T-cell (primary cell): ENCODE measurements at regions of chr5 and their contacts with region 1.

Region 1: DNA sequence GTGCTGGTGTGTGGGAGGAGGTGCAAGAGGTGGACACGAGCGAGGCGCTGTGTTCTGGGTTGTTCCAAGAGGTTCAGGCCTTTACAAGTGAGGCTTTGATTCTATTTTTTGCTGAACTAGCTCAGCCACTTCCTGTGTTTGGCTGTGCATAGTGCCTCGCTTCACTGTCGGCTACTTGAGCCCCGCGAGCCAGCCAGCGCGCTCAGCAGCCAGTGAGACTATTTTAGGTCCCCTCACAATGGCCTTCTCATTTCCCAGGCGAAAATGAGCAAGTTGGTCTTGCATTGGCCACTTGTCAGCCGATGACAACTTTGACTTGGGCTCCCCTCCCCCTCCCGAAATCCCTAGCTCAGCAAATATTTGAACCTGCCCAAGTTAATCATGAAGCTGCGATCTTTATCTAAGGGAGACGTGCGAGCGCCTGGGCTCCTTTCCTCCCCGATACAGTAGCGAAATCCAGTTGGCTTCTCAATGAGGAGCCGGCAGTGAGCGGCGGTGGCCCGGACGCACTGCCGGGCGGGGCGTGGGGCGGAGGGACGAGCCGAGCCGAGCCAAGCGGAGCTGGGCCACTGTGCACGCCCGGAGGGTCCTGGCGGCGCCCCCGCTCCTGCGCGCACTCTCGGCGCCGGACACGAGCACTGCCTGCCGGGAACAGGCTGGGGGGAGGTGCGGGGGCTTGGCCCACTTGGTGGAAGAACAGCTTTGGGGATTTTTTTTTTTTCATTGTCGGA is 72.6 kb downstream of the PIK3R1 start:
- DNase-seq: peak; percentile 7 to 67 (median 33)
- ATAC-seq: peak; percentile 79 to 86 (median 82)
- H3K4me3 ChIP-seq: peak overlapping the region; percentile 54 to 79
- H3K4me3 Mint-ChIP-seq: peak overlapping the region; percentile 85 to 90 (median 88)
- H3K27ac ChIP-seq: peak overlapping the region; percentile 61
- H3K27ac Mint-ChIP-seq: peak overlapping the region; percentile 96 to 98
- H3K4me1 ChIP-seq: peaks cover 41% of the 10 kb centered on the region in 2 experiments
- H3K4me1 Mint-ChIP-seq: peaks cover 89 to 91% (median 91%) of the 10 kb centered on the region in 3 donors
- H3K27me3 ChIP-seq: no peaks in the 10 kb centered on the region
- H3K27me3 Mint-ChIP-seq: no peaks in the 10 kb centered on the region

Region 2: GRCh38 chr5:68114378-68115040 is 173.6 kb before region 1 on chr5:
- CTCF ChIA-PET with region 1: no interaction called
- POLR2A ChIA-PET with region 1: no interaction called
- DNase-seq: no peak
- ATAC-seq: no peak
- H3K4me3 ChIP-seq: no peak overlapping the region
- H3K4me3 Mint-ChIP-seq: no peak overlapping the region
- H3K27ac ChIP-seq: no peak overlapping the region
- H3K27ac Mint-ChIP-seq: no peak overlapping the region
- H3K4me1 ChIP-seq: no peaks in the 10 kb centered on the region
- H3K4me1 Mint-ChIP-seq: peaks cover under 1 to 3% (median 3%) of the 10 kb centered on the region in 3 donors
- H3K27me3 ChIP-seq: no peaks in the 10 kb centered on the region
- H3K27me3 Mint-ChIP-seq: peaks cover 0 to 4% of the 10 kb centered on the region in 2 donors

Region 3: DNA sequence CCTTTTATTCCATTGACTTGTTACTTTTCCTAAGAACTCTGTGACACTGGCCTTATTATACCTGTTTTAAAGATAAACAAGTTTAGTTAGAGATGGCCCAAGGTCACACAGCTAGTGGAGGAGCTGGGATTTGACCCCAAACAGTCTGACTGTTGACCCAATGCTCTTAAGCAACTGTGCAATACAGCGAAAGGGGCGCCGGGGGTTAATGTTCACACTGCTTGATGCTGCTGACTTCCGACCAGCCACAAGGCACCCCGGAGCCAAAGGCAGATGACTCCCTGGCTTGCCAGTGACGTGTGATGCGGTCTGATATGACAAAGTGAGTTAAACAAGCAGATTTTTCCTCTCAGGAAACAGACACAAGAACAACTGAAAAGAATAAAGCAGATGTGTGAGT is 48.7 kb before region 1 on chr5:
- CTCF ChIA-PET with region 1: interaction called, 5 to 7 read pairs
- POLR2A ChIA-PET with region 1: interaction called in 1 of 2 experiments, 10 read pairs
- DNase-seq: peak; percentile 36 to 91 (median 85)
- ATAC-seq: peak; percentile 94 to 98 (median 96)
- H3K4me3 ChIP-seq: no peak overlapping the region
- H3K4me3 Mint-ChIP-seq: peak overlapping the region; percentile 11 to 62 (median 29)
- H3K27ac ChIP-seq: peak overlapping the region; percentile 65
- H3K27ac Mint-ChIP-seq: peak overlapping the region; percentile 76 to 82
- H3K4me1 ChIP-seq: peaks cover 27 to 37% of the 10 kb centered on the region in 2 experiments
- H3K4me1 Mint-ChIP-seq: peaks cover 79 to 87% (median 83%) of the 10 kb centered on the region in 3 donors
- H3K27me3 ChIP-seq: no peaks in the 10 kb centered on the region
- H3K27me3 Mint-ChIP-seq: no peaks in the 10 kb centered on the region

Region 4: GRCh38 chr5:68272289-68272688 is 15.9 kb before region 1 on chr5:
- CTCF ChIA-PET with region 1: interaction called, 10 to 57 read pairs
- POLR2A ChIA-PET with region 1: interaction called, 4 to 6 read pairs
- DNase-seq: peak in 1 of 35 experiments; percentile 51
- ATAC-seq: no peak
- H3K4me3 ChIP-seq: no peak overlapping the region
- H3K4me3 Mint-ChIP-seq: no peak overlapping the region
- H3K27ac ChIP-seq: no peak overlapping the region
- H3K27ac Mint-ChIP-seq: peak overlapping the region; percentile 17 to 98
- H3K4me1 ChIP-seq: peaks cover 26 to 41% of the 10 kb centered on the region in 2 experiments
- H3K4me1 Mint-ChIP-seq: peaks cover 77 to 96% (median 94%) of the 10 kb centered on the region in 3 donors
- H3K27me3 ChIP-seq: no peaks in the 10 kb centered on the region
- H3K27me3 Mint-ChIP-seq: no peaks in the 10 kb centered on the region

Region 5: DNA sequence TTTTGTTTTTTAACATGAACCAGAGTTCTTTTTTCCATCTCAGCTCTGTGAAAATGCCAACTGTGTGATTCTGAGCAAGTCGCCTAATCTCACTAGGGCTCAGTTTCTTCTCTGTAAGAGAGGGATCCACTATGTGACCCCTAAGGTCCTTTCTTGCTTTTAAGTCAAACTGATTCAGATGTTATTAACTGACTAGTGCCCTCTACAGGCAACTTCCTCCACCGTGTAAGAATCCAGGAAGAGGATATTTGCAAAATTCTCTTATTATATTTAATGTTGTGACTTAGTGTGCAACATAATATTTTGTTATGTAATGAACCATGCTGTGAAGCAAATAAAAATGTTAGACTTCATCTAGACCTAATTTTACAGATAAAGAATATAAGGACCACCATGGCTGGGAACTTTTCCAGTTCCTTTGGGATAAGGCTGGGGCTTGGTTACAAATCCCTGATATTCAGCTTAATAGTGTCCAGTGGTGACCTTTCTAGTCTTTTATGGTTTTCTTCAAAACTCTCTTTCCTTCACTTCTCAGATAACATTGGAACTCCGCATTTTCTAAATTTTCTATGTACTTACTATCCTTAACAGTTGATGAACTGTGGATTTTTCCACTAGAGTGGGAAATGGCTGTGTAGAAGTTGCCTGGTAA is 172.1 kb after region 1 on chr5:
- CTCF ChIA-PET with region 1: interaction called, 16 to 27 read pairs
- POLR2A ChIA-PET with region 1: interaction called, 3 to 4 read pairs
- DNase-seq: peak in 28 of 35 experiments; percentile 4 to 80 (median 30)
- ATAC-seq: peak in 2 of 4 experiments; percentile 44 to 54
- H3K4me3 ChIP-seq: no peak overlapping the region
- H3K4me3 Mint-ChIP-seq: no peak overlapping the region
- H3K27ac ChIP-seq: no peak overlapping the region
- H3K27ac Mint-ChIP-seq: no peak overlapping the region
- H3K4me1 ChIP-seq: peaks cover 7 to 10% of the 10 kb centered on the region in 2 experiments
- H3K4me1 Mint-ChIP-seq: peaks cover 16 to 18% (median 18%) of the 10 kb centered on the region in 3 donors
- H3K27me3 ChIP-seq: no peaks in the 10 kb centered on the region
- H3K27me3 Mint-ChIP-seq: no peaks in the 10 kb centered on the region